ENCODE measurements at regions of chr2 and their contacts with region 1.

Region 1: DNA sequence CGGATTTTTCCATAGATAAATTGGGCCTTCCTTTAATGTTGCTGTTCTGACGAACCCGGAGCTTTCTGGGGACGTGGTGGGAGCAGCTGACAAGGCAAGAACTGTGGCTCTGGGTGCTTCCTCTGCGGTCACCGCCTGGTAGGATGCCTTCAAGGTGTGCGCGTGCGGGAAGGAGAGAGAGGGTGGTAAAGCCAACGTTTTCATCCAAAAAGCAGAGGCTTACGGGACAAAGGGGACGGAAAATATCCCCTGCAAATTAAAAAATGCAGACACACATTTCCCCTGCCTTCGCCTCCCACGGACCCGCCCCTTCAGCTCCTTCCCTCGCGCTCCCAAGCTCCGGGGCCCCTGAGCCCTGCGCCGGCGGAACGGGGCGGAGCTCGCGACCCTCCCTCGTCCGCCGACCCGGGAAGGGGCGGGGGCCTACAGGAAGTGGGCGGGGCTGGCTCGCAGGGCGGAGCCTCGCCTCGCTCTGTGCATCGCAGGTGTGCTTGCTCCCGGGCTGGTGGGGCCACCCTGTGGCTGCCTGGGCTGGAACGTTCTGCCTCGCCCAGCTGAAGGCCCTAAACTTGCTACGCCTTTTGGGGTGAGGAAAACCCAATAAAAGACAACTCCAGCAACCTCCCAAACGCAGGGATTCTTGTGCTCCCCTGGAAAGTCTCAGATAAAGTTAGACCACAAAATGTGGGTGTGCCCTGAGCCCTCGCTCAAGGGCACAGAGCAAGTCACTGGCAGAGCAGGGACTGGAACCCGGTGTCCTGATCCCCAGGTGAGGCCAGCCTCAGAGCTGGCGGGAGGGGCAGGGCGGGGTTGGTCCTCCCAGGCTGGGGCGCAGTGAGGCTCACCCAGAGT is 25.4 kb upstream of the SLC66A3 start:
- DNase-seq: peak; percentile 69 to 79 (median 74)
- H3K4me3 ChIP-seq: peak overlapping the region; percentile 32 to 75 (median 59)
- H3K27ac ChIP-seq: peak overlapping the region in 1 of 2 experiments; percentile 5
- H3K4me1 ChIP-seq: peaks cover 3 to 51% (median 34%) of the 10 kb centered on the region in 4 experiments
- H3K27me3 ChIP-seq: peaks cover 0 to 9% (median 5%) of the 10 kb centered on the region in 5 experiments

Region 2: DNA sequence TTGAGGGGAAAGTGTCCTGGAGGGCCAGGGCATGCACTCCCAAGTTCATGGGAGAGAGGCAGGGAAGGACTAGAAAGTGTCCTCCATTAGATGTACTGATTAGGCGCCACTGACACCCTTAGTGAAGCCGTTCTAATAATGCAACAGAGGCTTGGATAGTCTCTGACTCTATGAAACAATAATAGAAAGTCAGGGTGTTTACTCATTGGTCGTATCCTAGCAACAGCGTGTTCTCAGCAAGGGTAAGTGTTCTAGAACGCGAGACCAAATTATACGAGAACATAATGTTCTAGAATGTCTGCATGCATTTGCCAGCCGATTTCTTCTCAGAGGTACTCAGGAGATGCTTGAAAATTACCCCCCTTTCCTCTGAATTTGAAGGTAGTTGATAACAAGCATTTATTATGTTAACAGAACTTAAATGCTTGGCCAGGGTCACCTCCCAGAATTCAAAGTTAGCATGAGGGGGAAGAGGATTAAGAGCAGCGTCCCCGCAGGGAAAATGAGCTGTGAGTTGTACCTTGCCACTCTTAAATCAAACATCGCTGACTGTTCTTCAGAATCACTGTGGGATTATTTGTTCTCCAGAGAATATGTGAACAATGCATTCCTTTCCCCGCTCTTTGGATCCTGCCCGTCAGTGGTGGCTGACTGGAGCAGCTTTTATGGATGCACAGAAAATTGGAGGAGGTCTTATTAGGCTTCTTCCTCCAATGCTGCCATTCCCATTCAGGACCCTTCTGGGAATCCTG is 283.5 kb before region 1 on chr2:
- CTCF ChIA-PET with region 1: no interaction called
- POLR2A ChIA-PET with region 1: interaction called, 10 read pairs
- DNase-seq: no peak
- H3K4me3 ChIP-seq: no peak overlapping the region
- H3K27ac ChIP-seq: no peak overlapping the region
- H3K4me1 ChIP-seq: no peaks in the 10 kb centered on the region
- H3K27me3 ChIP-seq: peaks cover 0 to 9% (median 2%) of the 10 kb centered on the region in 5 experiments

Region 3: GRCh38 chr2:11203480-11203879 is 73.7 kb after region 1 on chr2:
- CTCF ChIA-PET with region 1: interaction called, 10 read pairs
- POLR2A ChIA-PET with region 1: interaction called, 6 read pairs
- DNase-seq: peak; percentile 34 to 80 (median 70)
- H3K4me3 ChIP-seq: peak overlapping the region in 2 of 7 experiments; percentile 23 to 24
- H3K27ac ChIP-seq: peak overlapping the region in 1 of 2 experiments; percentile 19
- H3K4me1 ChIP-seq: peaks cover 6 to 22% (median 15%) of the 10 kb centered on the region in 4 experiments
- H3K27me3 ChIP-seq: no peaks in the 10 kb centered on the region

Region 4: GRCh38 chr2:11411768-11412448 is 282.1 kb after region 1 on chr2:
- CTCF ChIA-PET with region 1: interaction called, 19 read pairs
- POLR2A ChIA-PET with region 1: no interaction called
- DNase-seq: peak; percentile 23 to 47 (median 35)
- H3K4me3 ChIP-seq: peak overlapping the region in 6 of 7 experiments; percentile 20 to 74 (median 34)
- H3K27ac ChIP-seq: no peak overlapping the region
- H3K4me1 ChIP-seq: peaks cover 0 to 2% (median 0%) of the 10 kb centered on the region in 4 experiments
- H3K27me3 ChIP-seq: no peaks in the 10 kb centered on the region

Region 5: DNA sequence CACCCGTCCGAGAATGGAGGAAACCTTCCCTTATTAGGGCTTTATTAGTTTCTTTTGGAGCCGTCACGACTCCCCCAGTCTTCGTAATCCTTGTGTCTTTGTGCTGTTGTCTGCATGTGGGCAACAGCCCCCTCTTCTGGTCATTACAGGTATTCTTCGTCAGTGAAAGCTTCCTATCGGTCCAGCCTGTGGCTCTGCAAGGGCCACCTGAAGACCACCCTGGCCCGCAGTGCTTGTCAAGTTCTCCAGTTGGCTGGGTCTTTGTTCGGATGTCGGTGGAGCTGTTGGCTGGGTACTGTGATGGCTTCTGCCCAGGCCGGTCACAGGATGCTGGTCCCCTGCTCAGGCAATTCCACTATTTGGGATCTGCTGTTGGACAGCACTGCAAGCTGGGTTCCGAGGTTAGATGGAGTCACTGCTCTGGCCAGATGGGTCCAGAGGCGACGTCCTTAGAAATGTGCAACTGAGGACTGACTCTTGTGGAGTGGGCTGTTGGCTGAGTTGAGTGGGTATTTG is 317.0 kb after region 1 on chr2:
- CTCF ChIA-PET with region 1: interaction called, 12 read pairs
- POLR2A ChIA-PET with region 1: no interaction called
- DNase-seq: peak; percentile 65 to 83 (median 78)
- H3K4me3 ChIP-seq: no peak overlapping the region
- H3K27ac ChIP-seq: no peak overlapping the region
- H3K4me1 ChIP-seq: no peaks in the 10 kb centered on the region
- H3K27me3 ChIP-seq: no peaks in the 10 kb centered on the region

Region 6: DNA sequence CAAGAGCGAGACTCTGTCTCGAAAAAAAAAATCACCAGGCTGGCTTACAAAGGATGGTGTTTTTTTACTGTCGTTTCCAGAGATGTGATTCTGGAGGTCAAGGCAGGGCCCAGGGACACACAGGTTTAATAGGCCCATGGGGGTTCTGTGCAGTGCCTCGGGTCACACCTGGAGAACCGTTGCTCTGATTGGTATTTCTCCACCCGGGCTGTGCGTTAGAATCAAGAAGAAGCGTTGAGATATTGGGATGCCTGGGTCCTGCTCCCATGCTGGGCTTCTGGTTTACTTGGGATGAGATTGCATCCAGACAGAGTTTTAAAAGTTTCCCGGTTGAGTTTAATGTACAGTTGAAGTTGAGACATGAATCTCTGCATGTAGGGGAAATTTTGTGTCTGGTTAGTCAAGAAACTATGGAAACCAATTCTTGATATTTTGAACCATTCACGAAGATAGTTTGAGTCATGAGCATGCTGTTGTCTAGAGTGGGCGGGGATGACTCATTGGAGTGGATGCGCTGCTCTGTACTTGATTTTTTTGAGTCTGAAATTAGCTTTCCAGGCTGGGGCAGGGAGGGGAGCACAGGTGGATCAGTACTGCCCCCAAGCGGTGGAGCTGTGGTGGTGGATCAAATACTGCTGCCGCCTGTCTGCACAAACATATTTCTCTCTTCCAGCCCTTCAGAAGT is 454.2 kb after region 1 on chr2:
- CTCF ChIA-PET with region 1: interaction called, 52 read pairs
- POLR2A ChIA-PET with region 1: no interaction called
- DNase-seq: peak; percentile 87 to 95 (median 94)
- H3K4me3 ChIP-seq: no peak overlapping the region
- H3K27ac ChIP-seq: no peak overlapping the region
- H3K4me1 ChIP-seq: no peaks in the 10 kb centered on the region
- H3K27me3 ChIP-seq: peaks cover 0 to 9% (median 3%) of the 10 kb centered on the region in 5 experiments